Gastrocnemius medialis (tissue), 4 donors: ENCODE measurements at regions of chr16 and their contacts with region 1.

Region 1: DNA sequence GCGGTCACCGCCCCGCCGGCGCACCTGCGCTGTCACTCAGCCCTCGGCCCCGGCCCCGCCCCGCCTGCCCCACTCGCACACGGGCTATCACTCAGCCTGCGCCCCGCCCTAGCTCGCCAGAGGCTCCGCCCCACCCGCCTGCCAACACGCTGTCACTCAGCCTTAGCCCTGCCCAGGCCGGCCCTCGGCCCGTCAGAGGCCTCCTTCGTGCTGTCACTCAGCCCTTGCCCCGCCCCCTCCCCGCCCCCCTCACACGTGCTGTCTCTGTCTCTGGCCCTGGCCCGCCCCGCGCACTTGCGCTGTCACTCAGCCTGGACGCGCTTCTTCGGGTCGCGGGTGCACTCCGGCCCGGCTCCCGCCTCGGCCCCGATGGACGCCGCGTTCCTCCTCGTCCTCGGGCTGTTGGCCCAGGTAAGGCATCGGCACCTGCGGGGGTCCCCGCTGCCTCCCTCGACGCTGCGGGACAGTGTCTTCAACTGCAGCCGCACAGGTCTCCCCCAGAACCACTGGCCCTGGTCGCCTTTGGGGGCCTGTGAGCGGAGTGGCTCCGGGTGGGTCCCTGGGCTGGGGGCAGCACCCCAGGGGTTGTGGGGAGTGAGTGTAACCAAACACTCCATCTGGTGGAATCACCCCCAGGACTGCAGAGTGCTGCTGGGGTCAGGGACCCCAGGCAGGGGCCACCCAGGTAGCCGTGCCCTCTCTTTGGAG is at the start of gene CDH15:
- DNase-seq: peak; percentile 96 to 99
- ATAC-seq: peak; percentile 71 to 82
- H3K4me3 ChIP-seq: peak within 1 kb of the TSS; percentile 74 to 94 (median 78)
- H3K27ac ChIP-seq: peak within 1 kb of the TSS; percentile 91 to 99 (median 96)
- H3K4me1 ChIP-seq: peaks cover 38 to 52% of the 10 kb centered on the region in 2 donors
- H3K27me3 ChIP-seq: peaks cover 4 to 11% (median 8%) of the 10 kb centered on the region in 3 donors
- CTCF ChIP-seq: no peak
- POLR2A ChIP-seq: peak; percentile 89 to 96
- total RNA-seq, gene CDH15: 48.5 to 60.8 (median 51.0) TPM

Region 2: DNA sequence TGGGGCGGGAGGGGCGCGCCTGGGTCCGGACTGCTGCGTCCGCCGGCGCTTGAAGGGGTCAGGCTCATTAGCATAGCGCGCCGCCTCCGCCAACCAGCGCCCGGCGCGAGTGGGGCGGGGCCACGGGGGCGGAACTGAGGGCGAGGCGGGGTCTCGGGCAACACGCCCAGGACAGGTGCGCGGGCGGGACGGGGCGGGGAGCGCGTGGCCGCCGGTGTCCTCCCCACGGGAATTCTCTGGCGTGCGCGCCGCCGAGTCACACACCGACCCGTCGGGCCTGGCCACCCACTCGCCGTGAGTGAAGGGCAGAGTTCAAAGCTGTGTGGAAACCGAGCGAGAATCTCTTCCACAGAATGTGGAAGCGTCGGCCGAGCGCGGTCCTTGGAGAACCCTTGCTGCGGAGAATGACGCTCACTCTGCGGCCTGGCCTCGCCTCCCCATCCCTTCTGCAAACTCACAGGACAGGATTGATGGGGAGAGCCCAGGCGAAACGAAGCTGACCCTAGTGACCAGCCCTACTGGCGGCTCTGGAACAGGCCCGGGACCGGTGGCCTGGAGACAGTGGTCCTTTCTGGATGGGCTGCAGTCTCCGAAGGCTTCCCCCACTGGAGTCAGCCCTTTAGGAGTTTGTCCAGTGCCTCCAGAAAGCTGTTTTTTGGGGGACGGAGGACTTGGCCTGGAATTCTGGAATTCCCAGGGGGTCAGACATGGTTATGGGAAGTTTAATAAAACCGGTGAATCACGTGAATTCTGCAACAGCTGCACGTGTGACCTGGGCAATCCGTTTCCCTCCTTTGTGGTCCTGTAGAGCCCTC is 485.0 kb before region 1 on chr16 and contains the start of gene SNAI3:
- in situ Hi-C with region 1: no loop called
- intact Hi-C with region 1: loop called (anchors 2 kb)
- DNase-seq: peak; percentile 78 to 87
- ATAC-seq: peak; percentile 80
- H3K4me3 ChIP-seq: peak within 1 kb of the TSS; percentile 68 to 83 (median 75)
- H3K27ac ChIP-seq: peak within 1 kb of the TSS; percentile 82 to 96 (median 88)
- H3K4me1 ChIP-seq: peaks cover 16 to 31% of the 10 kb centered on the region in 2 donors
- H3K27me3 ChIP-seq: no peaks in the 10 kb centered on the region
- CTCF ChIP-seq: no peak
- POLR2A ChIP-seq: peak; percentile 73 to 75
- total RNA-seq, gene SNAI3: 1.2 to 2.2 (median 1.6) TPM

Region 3: GRCh38 chr16:88811769-88812512 is 359.7 kb before region 1 on chr16 and contains the start of gene APRT:
- in situ Hi-C with region 1: no loop called
- intact Hi-C with region 1: loop called (anchors 2 kb)
- DNase-seq: peak; percentile 89
- ATAC-seq: peak; percentile 90 to 92
- H3K4me3 ChIP-seq: peak within 1 kb of the TSS; percentile 70 to 81 (median 74)
- H3K27ac ChIP-seq: peak within 1 kb of the TSS; percentile 81 to 91 (median 90)
- H3K4me1 ChIP-seq: peaks cover 14 to 21% of the 10 kb centered on the region in 2 donors
- H3K27me3 ChIP-seq: no peaks in the 10 kb centered on the region
- CTCF ChIP-seq: peak in 3 of 5 experiments; percentile 16 to 45 (median 25)
- POLR2A ChIP-seq: peak; percentile 83 to 85
- total RNA-seq, gene APRT: 56.2 to 78.7 (median 62.4) TPM

Region 4: GRCh38 chr16:88941913-88942909 is 229.4 kb before region 1 on chr16:
- in situ Hi-C with region 1: no loop called
- intact Hi-C with region 1: loop called (anchors 1 kb)
- DNase-seq: no peak
- ATAC-seq: peak; percentile 29 to 33
- H3K4me3 ChIP-seq: peak overlapping the region; percentile 36 to 63 (median 40)
- H3K27ac ChIP-seq: no peak overlapping the region
- H3K4me1 ChIP-seq: peaks cover 18% of the 10 kb centered on the region in 2 donors
- H3K27me3 ChIP-seq: peaks cover 10 to 29% (median 25%) of the 10 kb centered on the region in 3 donors
- CTCF ChIP-seq: peak in 4 of 5 experiments; percentile 58 to 86 (median 66)
- POLR2A ChIP-seq: no peak

Region 5: DNA sequence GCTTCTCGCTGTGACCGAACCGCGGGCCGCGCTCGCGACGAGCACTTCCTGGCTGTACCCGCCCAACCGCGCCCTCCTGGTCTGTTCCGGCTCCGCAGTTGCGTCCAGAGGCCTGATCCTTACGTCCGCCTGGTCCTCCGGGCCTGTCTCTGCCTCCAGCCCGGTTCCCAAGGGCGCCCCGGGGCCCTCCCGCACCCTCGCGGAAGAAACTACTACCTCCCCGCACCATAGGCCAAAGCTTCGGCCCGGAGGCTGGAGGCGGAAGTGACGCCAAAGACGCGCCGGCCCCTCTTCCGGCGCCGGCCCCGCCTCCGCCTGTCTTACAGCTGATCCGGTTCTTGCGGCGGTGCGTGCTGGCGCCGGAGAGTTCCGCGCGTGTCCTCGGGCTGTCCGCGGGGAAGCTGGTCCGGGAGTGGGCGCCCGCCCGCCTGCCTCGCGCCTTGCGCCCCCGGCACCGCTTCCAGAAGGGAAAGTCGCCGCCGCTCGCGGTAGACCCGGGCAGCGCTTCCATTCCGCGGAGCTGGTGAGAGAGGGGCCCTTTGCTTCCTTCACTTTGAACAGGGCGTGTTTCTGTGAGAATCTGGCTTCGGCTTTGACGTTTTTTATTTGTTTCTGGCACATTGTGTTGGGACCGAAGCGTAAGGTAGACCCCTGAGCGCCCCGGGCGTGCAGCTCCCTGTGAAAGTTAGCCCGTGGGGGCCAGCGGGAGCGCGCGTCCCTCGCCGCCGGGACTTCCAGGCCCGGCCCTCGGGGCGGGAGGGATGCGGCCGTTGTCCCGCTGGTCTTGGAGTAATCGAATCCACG is 46.0 kb after region 1 on chr16 and contains the start of gene ZNF778:
- in situ Hi-C with region 1: no loop called
- intact Hi-C with region 1: loop called (anchors 1 kb)
- DNase-seq: peak; percentile 73 to 79
- ATAC-seq: peak; percentile 82 to 87
- H3K4me3 ChIP-seq: peak within 1 kb of the TSS; percentile 84 to 98 (median 92)
- H3K27ac ChIP-seq: peak within 1 kb of the TSS; percentile 95 to 100 (median 98)
- H3K4me1 ChIP-seq: peaks cover 25% of the 10 kb centered on the region in 2 donors
- H3K27me3 ChIP-seq: no peaks in the 10 kb centered on the region
- CTCF ChIP-seq: peak in 1 of 5 experiments; percentile 24
- POLR2A ChIP-seq: peak; percentile 94 to 97
- total RNA-seq, gene ZNF778: 10.7 to 21.3 (median 17.9) TPM

Region 6: DNA sequence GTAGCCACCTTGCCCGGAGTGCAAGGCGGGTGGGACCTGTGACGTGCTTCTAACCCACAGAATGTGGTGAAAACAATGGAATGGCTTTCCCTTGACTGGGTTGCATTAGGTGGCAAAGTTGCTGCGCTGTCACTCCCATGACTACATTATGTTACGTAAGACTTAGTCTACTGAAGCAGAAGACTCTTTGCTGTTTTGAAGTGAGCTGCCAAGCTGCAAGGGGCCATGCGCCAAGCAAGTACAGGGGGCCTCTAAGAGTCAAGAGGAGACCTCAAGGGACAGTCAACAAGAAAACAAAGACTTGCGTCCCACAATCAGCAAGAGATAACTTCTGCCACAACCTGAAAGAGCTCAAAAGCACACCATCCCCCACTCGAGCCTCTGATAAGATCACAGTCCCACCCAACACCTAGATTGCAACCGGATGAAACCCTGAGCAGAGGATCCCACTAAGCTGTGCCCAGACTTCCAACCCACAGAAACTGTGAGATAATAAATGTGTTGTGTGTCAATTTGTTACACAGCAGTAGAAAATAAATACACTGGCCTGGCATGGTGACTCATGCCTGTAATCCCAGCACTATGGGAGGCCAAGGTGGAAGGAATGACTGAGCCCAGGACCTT is 302.3 kb after region 1 on chr16:
- in situ Hi-C with region 1: no loop called
- intact Hi-C with region 1: no loop called
- DNase-seq: no peak
- ATAC-seq: no peak
- H3K4me3 ChIP-seq: no peak overlapping the region
- H3K27ac ChIP-seq: peak overlapping the region in 1 of 4 donors; percentile 86
- H3K4me1 ChIP-seq: peaks cover 86 to 87% of the 10 kb centered on the region in 2 donors
- H3K27me3 ChIP-seq: no peaks in the 10 kb centered on the region
- CTCF ChIP-seq: no peak
- POLR2A ChIP-seq: no peak